ENCODE measurements at regions of chr22 and their contacts with region 1.

Region 1: GRCh38 chr22:29072193-29072978 is 449 bp upstream of the KREMEN1 start:
- DNase-seq: peak; percentile 67 to 92 (median 76)
- ATAC-seq: peak; percentile 97
- H3K4me3 ChIP-seq: peak overlapping the region; percentile 49
- H3K4me3 Mint-ChIP-seq: peak overlapping the region; percentile 83
- H3K27ac ChIP-seq: no peak overlapping the region
- H3K27ac Mint-ChIP-seq: no peak overlapping the region
- H3K4me1 ChIP-seq: peaks cover 33% of the 10 kb centered on the region
- H3K4me1 Mint-ChIP-seq: peaks cover 28% of the 10 kb centered on the region
- H3K27me3 ChIP-seq: peaks cover 39 to 44% of the 10 kb centered on the region in 2 experiments
- H3K27me3 Mint-ChIP-seq: peaks cover 57% of the 10 kb centered on the region
- CTCF ChIP-seq: no peak

Region 2: DNA sequence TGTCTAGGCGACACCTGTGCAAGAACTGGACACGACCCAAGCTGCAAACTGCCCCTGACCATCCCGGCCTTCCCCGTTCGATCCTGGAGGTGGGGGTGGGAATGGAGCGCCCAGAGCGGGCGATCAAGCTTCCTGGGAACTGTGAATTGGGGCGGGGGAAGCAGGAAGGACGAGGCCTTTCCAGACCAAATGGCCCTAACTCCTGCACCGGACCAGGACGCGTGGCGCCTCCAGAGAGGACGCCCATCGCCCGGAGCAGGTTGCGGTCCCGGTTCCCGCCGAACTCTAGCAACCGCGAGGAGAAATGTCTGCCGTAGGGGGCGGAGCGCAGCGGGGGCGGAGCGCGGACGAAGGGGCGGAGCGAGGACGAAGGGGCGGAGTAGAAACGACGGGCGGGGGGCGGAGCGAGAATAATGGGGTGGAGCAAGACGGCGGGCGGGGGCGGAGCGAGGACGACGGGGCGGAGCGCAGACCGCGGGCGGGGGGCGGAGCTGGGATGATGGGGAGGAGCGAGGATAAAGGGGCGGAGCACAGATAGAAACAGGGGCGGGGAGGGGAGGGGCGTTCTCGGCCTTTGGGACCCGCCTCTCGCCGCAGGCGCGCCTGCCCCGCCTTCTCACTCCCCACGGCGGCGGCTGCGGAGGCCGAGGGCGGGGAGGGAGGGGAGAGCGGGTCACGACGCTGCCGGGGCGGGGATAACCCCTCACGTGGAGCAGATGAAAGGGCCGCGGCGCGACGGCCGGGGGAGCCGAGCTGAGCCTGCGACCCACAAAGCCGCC is 189.3 kb before region 1 on chr22 and contains the start of gene ZNRF3:
- CTCF ChIA-PET with region 1: no interaction called
- POLR2A ChIA-PET with region 1: interaction called, 3 read pairs
- intact Hi-C with region 1: loop called in 1 of 2 experiments (anchors 2 kb)
- DNase-seq: peak; percentile 86 to 96 (median 92)
- ATAC-seq: peak; percentile 87
- H3K4me3 ChIP-seq: peak within 1 kb of the TSS; percentile 82
- H3K4me3 Mint-ChIP-seq: peak within 1 kb of the TSS; percentile 94
- H3K27ac ChIP-seq: no peak within 1 kb of the TSS
- H3K27ac Mint-ChIP-seq: peak within 1 kb of the TSS; percentile 74
- H3K4me1 ChIP-seq: peaks cover 16% of the 10 kb centered on the region
- H3K4me1 Mint-ChIP-seq: peaks cover 23% of the 10 kb centered on the region
- H3K27me3 ChIP-seq: peaks cover 4 to 7% of the 10 kb centered on the region in 2 experiments
- H3K27me3 Mint-ChIP-seq: peaks cover 23% of the 10 kb centered on the region
- CTCF ChIP-seq: no peak
- total RNA-seq, gene ZNRF3: 0.38 to 0.61 TPM

Region 3: DNA sequence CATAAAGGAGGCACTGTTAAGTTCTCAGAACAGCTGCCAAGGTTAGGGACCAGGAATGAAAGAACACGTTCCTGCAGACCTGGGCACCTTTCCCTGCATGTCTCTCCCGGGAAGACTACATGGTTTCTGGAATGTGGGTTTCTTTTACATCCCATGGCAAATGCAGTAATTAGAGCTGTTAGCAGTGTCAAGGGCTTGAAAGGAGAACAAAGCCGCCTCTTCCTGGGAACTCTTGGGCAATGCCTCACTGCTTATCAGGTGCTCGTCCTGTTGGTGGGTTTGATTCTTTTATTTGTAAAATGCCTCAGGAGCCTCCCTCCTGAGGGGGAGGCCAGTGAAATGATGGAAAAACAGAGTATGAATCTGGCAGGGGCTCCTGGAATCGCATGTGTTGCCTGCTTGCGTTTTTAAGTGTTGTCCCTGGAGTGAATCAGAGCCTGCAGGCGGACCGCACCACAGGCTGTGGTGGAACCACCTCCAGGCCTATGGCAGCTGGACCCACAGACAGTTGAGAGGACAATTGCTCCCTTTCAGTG is 10.0 kb before region 1 on chr22:
- CTCF ChIA-PET with region 1: no interaction called
- POLR2A ChIA-PET with region 1: no interaction called
- intact Hi-C with region 1: no loop called
- DNase-seq: no peak
- ATAC-seq: no peak
- H3K4me3 ChIP-seq: no peak overlapping the region
- H3K4me3 Mint-ChIP-seq: no peak overlapping the region
- H3K27ac ChIP-seq: no peak overlapping the region
- H3K27ac Mint-ChIP-seq: no peak overlapping the region
- H3K4me1 ChIP-seq: peaks cover 4% of the 10 kb centered on the region
- H3K4me1 Mint-ChIP-seq: peaks cover 12% of the 10 kb centered on the region
- H3K27me3 ChIP-seq: no peaks in the 10 kb centered on the region
- H3K27me3 Mint-ChIP-seq: peaks cover 47% of the 10 kb centered on the region
- CTCF ChIP-seq: no peak

Region 4: GRCh38 chr22:29152045-29152953 is 79.9 kb after region 1 on chr22:
- CTCF ChIA-PET with region 1: no interaction called
- POLR2A ChIA-PET with region 1: no interaction called
- intact Hi-C with region 1: no loop called
- DNase-seq: no peak
- ATAC-seq: no peak
- H3K4me3 ChIP-seq: no peak overlapping the region
- H3K4me3 Mint-ChIP-seq: no peak overlapping the region
- H3K27ac ChIP-seq: no peak overlapping the region
- H3K27ac Mint-ChIP-seq: no peak overlapping the region
- H3K4me1 ChIP-seq: peaks cover 6% of the 10 kb centered on the region
- H3K4me1 Mint-ChIP-seq: peaks cover 8% of the 10 kb centered on the region
- H3K27me3 ChIP-seq: peaks cover 6% of the 10 kb centered on the region in 2 experiments
- H3K27me3 Mint-ChIP-seq: peaks cover 24% of the 10 kb centered on the region
- CTCF ChIP-seq: no peak